ENCODE measurements at regions of chr1 and their contacts with region 1.

Region 1: GRCh38 chr1:1906185-1907097 is 8.6 kb upstream of the CALML6 start:
- DNase-seq: peak in 1 of 2 experiments; percentile 89
- H3K4me3 ChIP-seq: no peak overlapping the region
- H3K27ac ChIP-seq: no peak overlapping the region
- H3K4me1 ChIP-seq: peaks cover 0 to 10% (median 5%) of the 10 kb centered on the region in 4 experiments; a peak in 5 of 7 replicates
- H3K27me3 ChIP-seq: no peaks in the 10 kb centered on the region; a peak in 1 of 7 replicates
- CTCF ChIP-seq: peak in 2 of 3 experiments; percentile 93 to 99; a peak in 3 of 4 replicates
- EP300 ChIP-seq: no peak
- POLR2A ChIP-seq: no peak
- RAD21 ChIP-seq: peak; percentile 96 to 97

Region 2: GRCh38 chr1:1788646-1789431 is 117.6 kb before region 1 on chr1:
- CTCF ChIA-PET with region 1: interaction called, 19 read pairs
- POLR2A ChIA-PET with region 1: no interaction called
- DNase-seq: peak in 1 of 2 experiments; percentile 64
- H3K4me3 ChIP-seq: no peak overlapping the region
- H3K27ac ChIP-seq: no peak overlapping the region
- H3K4me1 ChIP-seq: no peaks in the 10 kb centered on the region
- H3K27me3 ChIP-seq: no peaks in the 10 kb centered on the region
- CTCF ChIP-seq: peak; percentile 63 to 87 (median 79)
- EP300 ChIP-seq: no peak
- POLR2A ChIP-seq: no peak
- RAD21 ChIP-seq: peak; percentile 36 to 55

Region 3: DNA sequence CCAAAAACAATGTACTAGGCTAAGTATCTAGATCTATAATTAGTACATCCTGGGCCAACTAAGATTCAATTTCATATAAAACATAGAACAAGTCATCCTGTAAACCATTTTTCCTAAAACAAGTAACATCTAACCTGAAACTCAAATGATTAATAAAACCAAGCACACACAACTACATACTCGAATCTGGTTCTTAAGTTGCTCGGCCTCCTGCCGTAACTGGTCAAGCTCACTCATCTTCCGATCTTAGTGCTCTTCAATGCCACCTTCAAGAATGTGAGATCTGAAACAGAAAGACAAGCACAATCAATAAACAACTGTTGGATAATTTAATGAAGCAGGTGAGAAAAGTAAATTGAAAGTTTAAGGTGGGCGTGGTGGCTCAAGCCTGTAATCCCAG is 81.2 kb before region 1 on chr1:
- CTCF ChIA-PET with region 1: interaction called, 10 read pairs
- POLR2A ChIA-PET with region 1: interaction called, 4 read pairs
- DNase-seq: no peak
- H3K4me3 ChIP-seq: no peak overlapping the region
- H3K27ac ChIP-seq: no peak overlapping the region
- H3K4me1 ChIP-seq: no peaks in the 10 kb centered on the region; a peak in 1 of 7 replicates
- H3K27me3 ChIP-seq: no peaks in the 10 kb centered on the region
- CTCF ChIP-seq: no peak
- EP300 ChIP-seq: no peak
- POLR2A ChIP-seq: no peak
- RAD21 ChIP-seq: no peak

Region 4: GRCh38 chr1:1873186-1873585 is 33.3 kb before region 1 on chr1:
- CTCF ChIA-PET with region 1: interaction called, 13 read pairs
- POLR2A ChIA-PET with region 1: interaction called, 3 read pairs
- DNase-seq: no peak
- H3K4me3 ChIP-seq: no peak overlapping the region
- H3K27ac ChIP-seq: 0 out of 2 replicates have a peak overlapping the region, but pooled peaks have one; percentile 32
- H3K4me1 ChIP-seq: no peaks in the 10 kb centered on the region; a peak in 1 of 7 replicates
- H3K27me3 ChIP-seq: no peaks in the 10 kb centered on the region
- CTCF ChIP-seq: no peak
- EP300 ChIP-seq: no peak
- POLR2A ChIP-seq: no peak
- RAD21 ChIP-seq: no peak

Measured in H1 (cell line).